ENCODE measurements at regions of chr4 and their contacts with region 1.

Region 1: DNA sequence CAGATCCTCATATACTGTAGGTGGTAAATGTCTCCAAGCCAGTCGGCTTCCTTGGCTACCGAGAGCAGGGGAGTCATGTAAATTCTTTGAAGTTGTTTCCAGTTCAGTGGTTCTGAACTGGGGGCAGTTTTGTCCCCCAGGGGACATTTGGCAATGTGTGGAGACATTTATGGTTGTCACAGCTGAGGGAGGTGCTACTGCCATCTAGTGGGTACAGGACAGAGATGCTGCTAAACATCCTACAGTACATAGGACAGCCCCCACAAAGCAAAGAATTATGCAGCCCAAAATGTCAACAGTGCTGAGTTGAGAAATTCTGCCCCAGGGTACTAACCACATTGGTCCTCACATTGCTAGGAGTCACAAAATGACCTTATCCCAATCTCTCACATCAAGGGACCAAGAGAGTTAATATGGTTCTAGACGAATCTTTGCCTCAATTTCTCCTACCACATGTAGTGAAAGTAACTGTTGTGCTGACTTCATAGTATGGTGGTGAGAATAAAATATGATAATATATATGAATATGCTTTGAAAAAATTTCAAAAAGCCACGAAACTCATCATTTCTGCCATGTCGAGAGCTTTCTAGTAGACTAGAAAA is 104.4 kb upstream of the ARHGAP24 start:
- DNase-seq: peak; percentile 24
- H3K4me3 ChIP-seq: no peak overlapping the region
- H3K27ac ChIP-seq: no peak overlapping the region
- H3K4me1 ChIP-seq: no peaks in the 10 kb centered on the region
- H3K27me3 ChIP-seq: no peaks in the 10 kb centered on the region
- CTCF ChIP-seq: peak; percentile 53 to 89

Region 2: GRCh38 chr4:85039526-85039925 is 331.0 kb before region 1 on chr4:
- CTCF ChIA-PET with region 1: no interaction called
- dilution Hi-C with region 1: no loop called
- in situ Hi-C with region 1: no loop called
- intact Hi-C with region 1: no loop called
- DNase-seq: peak; percentile 1
- H3K4me3 ChIP-seq: no peak overlapping the region
- H3K27ac ChIP-seq: no peak overlapping the region
- H3K4me1 ChIP-seq: no peaks in the 10 kb centered on the region
- H3K27me3 ChIP-seq: no peaks in the 10 kb centered on the region
- CTCF ChIP-seq: no peak

Region 3: GRCh38 chr4:85084380-85085094 is 286.0 kb before region 1 on chr4:
- CTCF ChIA-PET with region 1: no interaction called
- dilution Hi-C with region 1: no loop called
- in situ Hi-C with region 1: no loop called
- intact Hi-C with region 1: loop called (anchors 1 kb)
- DNase-seq: peak; percentile 56
- H3K4me3 ChIP-seq: no peak overlapping the region
- H3K27ac ChIP-seq: no peak overlapping the region
- H3K4me1 ChIP-seq: no peaks in the 10 kb centered on the region
- H3K27me3 ChIP-seq: peaks cover 5% of the 10 kb centered on the region
- CTCF ChIP-seq: peak; percentile 59 to 73

Region 4: DNA sequence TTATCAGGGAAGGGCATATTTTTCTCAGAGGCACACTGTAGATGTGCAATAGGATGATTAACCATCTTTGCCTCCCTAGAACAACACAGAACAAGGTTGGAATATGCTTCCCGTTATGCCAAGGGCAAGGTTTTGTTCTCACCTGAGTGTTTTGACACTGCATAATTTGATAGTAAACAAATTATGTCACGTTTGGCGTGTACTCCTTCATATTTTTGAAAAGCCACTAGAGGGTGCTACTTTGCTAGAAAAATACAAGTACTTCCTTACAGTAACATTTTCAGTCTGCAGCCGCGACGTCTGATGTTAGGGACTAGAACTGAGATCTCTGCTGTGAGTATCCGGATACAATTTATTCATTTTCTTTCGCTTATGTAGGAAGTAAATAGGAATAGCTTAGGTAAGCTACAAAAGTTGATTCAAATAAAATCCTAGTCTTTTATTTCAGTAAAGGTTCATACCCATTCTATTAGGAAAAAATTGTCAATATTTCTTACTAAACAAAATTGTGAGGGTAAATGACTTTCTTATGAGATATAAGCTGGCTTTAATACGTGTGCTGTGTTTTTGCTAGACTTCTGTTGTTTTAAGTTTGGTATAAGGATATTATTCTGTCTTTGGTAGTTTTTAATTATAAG is 223.0 kb before region 1 on chr4:
- CTCF ChIA-PET with region 1: no interaction called
- dilution Hi-C with region 1: loop called (anchors 10 kb)
- in situ Hi-C with region 1: loop called (anchors 5 to 10 kb)
- intact Hi-C with region 1: loop called (anchors 1 kb)
- DNase-seq: peak; percentile 41
- H3K4me3 ChIP-seq: no peak overlapping the region
- H3K27ac ChIP-seq: no peak overlapping the region
- H3K4me1 ChIP-seq: peaks cover 3% of the 10 kb centered on the region
- H3K27me3 ChIP-seq: no peaks in the 10 kb centered on the region
- CTCF ChIP-seq: peak; percentile 47 to 61

Region 5: DNA sequence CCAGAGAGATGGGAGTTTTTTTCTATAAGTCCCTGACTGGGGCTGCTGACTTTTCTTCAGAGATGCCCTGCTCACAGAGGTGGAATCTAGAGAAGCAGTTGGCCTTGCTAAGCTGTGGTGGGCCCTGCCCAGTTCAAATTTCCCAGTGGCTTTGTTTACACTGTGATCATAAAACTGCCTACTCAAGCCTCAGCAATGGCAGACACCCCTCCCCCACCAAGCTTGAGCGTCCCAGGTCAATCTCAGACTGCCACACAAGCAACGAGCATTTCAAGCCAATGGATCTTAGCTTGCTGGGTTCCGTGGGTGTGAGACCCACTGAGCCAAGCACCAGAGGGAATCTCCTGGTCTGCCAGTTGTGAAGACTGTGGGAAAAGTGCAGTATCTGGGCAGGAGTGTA is 204.2 kb before region 1 on chr4:
- CTCF ChIA-PET with region 1: no interaction called
- dilution Hi-C with region 1: no loop called
- in situ Hi-C with region 1: no loop called
- intact Hi-C with region 1: loop called (anchors 1 kb)
- DNase-seq: no peak
- H3K4me3 ChIP-seq: no peak overlapping the region
- H3K27ac ChIP-seq: no peak overlapping the region
- H3K4me1 ChIP-seq: peaks cover 5% of the 10 kb centered on the region
- H3K27me3 ChIP-seq: no peaks in the 10 kb centered on the region
- CTCF ChIP-seq: no peak

Region 6: GRCh38 chr4:85358831-85359470 is 11.6 kb before region 1 on chr4:
- CTCF ChIA-PET with region 1: no interaction called
- dilution Hi-C with region 1: no loop called
- in situ Hi-C with region 1: no loop called
- intact Hi-C with region 1: no loop called
- DNase-seq: peak; percentile 56
- H3K4me3 ChIP-seq: no peak overlapping the region
- H3K27ac ChIP-seq: no peak overlapping the region
- H3K4me1 ChIP-seq: peaks cover 4% of the 10 kb centered on the region
- H3K27me3 ChIP-seq: no peaks in the 10 kb centered on the region
- CTCF ChIP-seq: no peak

Measured in mammary epithelial cell (primary cell).